Dendritic cell treated with granulocyte-macrophage colony-stimulating factor and Interleukin-4, amounts not matched to agents 40 ng/mL and 50 ng/mL, for 4 days (primary cell): ENCODE measurements at regions of chrX and their contacts with region 1.

Region 1: GRCh38 chrX:49995021-49995731 is 72.8 kb downstream of the CLCN5 start:
- H3K4me3 Mint-ChIP-seq: no peak overlapping the region
- H3K27ac Mint-ChIP-seq: no peak overlapping the region
- H3K4me1 Mint-ChIP-seq: peaks cover 60% of the 10 kb centered on the region
- H3K27me3 Mint-ChIP-seq: no peaks in the 10 kb centered on the region

Region 2: GRCh38 chrX:50075630-50076339 is 80.6 kb after region 1 on chrX:
- intact Hi-C with region 1: loop called (anchors 5 kb)
- H3K4me3 Mint-ChIP-seq: no peak overlapping the region
- H3K27ac Mint-ChIP-seq: peak overlapping the region; percentile 89
- H3K4me1 Mint-ChIP-seq: peaks cover 70% of the 10 kb centered on the region
- H3K27me3 Mint-ChIP-seq: no peaks in the 10 kb centered on the region